B cell (primary cell): ENCODE measurements at regions of chr2 and their contacts with region 1.

Region 1: GRCh38 chr2:233061591-233062450 is 1.7 kb downstream of the INPP5D start:
- DNase-seq: no peak
- ATAC-seq: peak; percentile 12
- H3K4me3 ChIP-seq: peak overlapping the region; percentile 91 to 99 (median 98)
- H3K4me3 Mint-ChIP-seq: peak overlapping the region; percentile 76
- H3K27ac ChIP-seq: peak overlapping the region; percentile 90 to 95
- H3K27ac Mint-ChIP-seq: peak overlapping the region; percentile 87
- H3K4me1 ChIP-seq: peaks cover 38 to 66% of the 10 kb centered on the region in 2 donors
- H3K4me1 Mint-ChIP-seq: peaks cover 56% of the 10 kb centered on the region
- H3K27me3 ChIP-seq: no peaks in the 10 kb centered on the region
- H3K27me3 Mint-ChIP-seq: no peaks in the 10 kb centered on the region
- CTCF ChIP-seq: peak; percentile 20

Region 2: GRCh38 chr2:232854082-232854481 is 207.7 kb before region 1 on chr2:
- CTCF ChIA-PET with region 1: interaction called, 18 read pairs
- POLR2A ChIA-PET with region 1: no interaction called
- intact Hi-C with region 1: no loop called
- DNase-seq: no peak
- ATAC-seq: no peak
- H3K4me3 ChIP-seq: no peak overlapping the region
- H3K4me3 Mint-ChIP-seq: no peak overlapping the region
- H3K27ac ChIP-seq: no peak overlapping the region
- H3K27ac Mint-ChIP-seq: no peak overlapping the region
- H3K4me1 ChIP-seq: no peaks in the 10 kb centered on the region
- H3K4me1 Mint-ChIP-seq: no peaks in the 10 kb centered on the region
- H3K27me3 ChIP-seq: no peaks in the 10 kb centered on the region
- H3K27me3 Mint-ChIP-seq: no peaks in the 10 kb centered on the region
- CTCF ChIP-seq: no peak

Region 3: DNA sequence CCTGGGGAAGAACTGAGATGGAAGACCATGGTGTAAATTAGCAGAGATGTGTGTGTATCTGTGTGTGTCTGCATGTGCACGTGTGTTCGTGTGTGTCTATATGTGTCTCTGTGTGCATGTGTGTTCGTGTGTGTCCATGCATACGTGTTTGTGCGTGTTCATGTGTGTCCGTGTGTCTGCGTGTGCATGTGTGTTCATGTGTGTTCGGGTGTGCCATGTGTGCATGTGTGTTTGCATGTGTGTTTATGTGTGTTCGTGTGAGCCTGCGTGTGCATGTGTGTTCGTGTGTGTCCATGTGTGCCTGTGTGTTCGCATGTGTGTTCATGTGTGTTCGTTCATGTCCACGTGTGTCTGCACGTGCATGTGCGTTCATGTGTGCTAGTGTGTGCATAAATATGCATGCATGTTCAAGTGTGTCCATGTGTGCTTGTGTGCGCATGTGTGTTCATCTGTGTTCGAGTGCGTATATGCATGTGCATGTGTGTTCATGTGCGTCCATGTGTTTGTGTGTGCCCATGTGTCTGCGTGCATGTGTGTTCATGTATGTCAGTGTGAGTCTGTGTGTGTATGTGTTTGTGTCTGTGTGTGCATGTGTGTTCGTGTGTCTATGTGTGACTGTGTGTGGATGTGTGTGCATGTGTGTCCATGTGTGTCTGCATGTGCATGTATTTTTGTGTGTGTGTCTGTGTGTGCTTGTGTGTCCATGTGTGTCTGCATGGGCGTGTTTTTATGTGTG is 26.2 kb before region 1 on chr2:
- CTCF ChIA-PET with region 1: no interaction called
- POLR2A ChIA-PET with region 1: no interaction called
- intact Hi-C with region 1: no loop called
- DNase-seq: no peak
- ATAC-seq: no peak
- H3K4me3 ChIP-seq: no peak overlapping the region
- H3K4me3 Mint-ChIP-seq: no peak overlapping the region
- H3K27ac ChIP-seq: no peak overlapping the region
- H3K27ac Mint-ChIP-seq: no peak overlapping the region
- H3K4me1 ChIP-seq: no peaks in the 10 kb centered on the region
- H3K4me1 Mint-ChIP-seq: no peaks in the 10 kb centered on the region
- H3K27me3 ChIP-seq: no peaks in the 10 kb centered on the region
- H3K27me3 Mint-ChIP-seq: peaks cover 6% of the 10 kb centered on the region
- CTCF ChIP-seq: no peak

Region 4: DNA sequence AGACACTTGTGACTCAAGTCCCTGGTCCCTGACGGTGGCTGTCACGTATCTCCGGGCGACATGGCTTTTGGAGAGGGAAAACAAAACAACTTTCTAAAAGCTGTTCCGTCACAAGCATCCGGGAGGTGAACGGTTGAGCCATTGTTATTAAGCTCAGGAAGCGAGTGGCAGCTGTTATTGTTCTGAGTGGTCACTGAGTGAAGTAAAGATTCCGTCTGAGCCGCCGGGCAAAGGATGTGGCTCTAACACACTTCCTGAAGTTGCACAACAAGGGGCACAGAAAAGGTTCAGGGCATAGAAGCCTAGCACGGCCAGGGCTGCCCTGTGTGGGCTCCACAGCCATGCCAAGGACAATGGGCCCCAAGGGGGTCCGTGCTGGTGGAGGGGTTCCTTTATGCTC is 22.7 kb after region 1 on chr2:
- CTCF ChIA-PET with region 1: interaction called, 70 read pairs
- POLR2A ChIA-PET with region 1: interaction called, 112 read pairs
- intact Hi-C with region 1: loop called (anchors 1 kb)
- DNase-seq: peak; percentile 53
- ATAC-seq: peak; percentile 19
- H3K4me3 ChIP-seq: peak overlapping the region; percentile 2 to 48 (median 17)
- H3K4me3 Mint-ChIP-seq: peak overlapping the region; percentile 78
- H3K27ac ChIP-seq: peak overlapping the region; percentile 88
- H3K27ac Mint-ChIP-seq: peak overlapping the region; percentile 94
- H3K4me1 ChIP-seq: peaks cover 91 to 100% of the 10 kb centered on the region in 2 donors
- H3K4me1 Mint-ChIP-seq: peaks cover 95% of the 10 kb centered on the region
- H3K27me3 ChIP-seq: no peaks in the 10 kb centered on the region
- H3K27me3 Mint-ChIP-seq: no peaks in the 10 kb centered on the region
- CTCF ChIP-seq: no peak

Region 5: DNA sequence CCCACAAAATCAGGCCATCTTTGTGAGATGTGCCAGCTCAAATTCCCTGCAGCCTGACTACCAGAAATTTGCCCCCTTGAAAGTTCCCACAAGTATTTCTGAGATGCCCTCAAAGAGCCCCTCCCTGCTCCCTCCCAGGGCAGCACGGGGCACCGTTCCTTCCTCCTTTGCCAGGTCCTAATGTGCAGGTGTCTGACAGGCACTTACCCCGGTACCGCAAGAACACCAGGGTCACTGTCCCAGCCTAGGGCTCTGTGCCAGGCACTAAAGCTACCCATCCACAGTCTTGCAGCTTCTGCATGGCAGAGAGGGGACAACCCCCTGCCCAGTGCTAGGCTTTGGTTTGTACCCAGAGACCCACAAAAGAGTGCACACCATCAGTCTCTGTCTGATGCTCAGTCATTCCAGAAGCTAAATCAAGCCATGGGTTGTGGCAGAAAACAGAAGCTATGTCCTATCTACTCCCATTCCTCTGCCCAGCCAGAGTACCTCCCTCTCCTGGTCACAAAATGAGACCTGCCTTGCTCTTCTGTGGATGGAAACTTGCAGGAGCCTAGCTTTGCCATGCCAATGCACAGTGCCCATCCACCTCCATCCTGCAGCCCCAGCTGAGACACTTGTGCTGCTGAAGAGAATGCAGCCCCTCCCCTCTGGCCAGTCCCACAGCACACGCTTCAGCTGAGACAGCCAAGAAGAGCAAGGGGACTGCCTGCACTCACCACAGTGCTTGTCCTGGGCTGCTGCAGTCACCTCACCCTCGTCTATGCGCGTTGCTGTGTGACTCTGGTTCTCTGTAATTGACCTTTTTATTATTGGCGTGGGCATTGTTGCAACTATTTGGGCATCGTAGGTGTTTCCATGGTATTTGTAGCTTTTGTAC is 47.0 kb after region 1 on chr2:
- CTCF ChIA-PET with region 1: interaction called, 21 read pairs
- POLR2A ChIA-PET with region 1: interaction called, 11 read pairs
- intact Hi-C with region 1: no loop called
- DNase-seq: peak; percentile 42
- ATAC-seq: peak; percentile 63
- H3K4me3 ChIP-seq: no peak overlapping the region
- H3K4me3 Mint-ChIP-seq: peak overlapping the region; percentile 82
- H3K27ac ChIP-seq: peak overlapping the region in 1 of 2 donors; percentile 73
- H3K27ac Mint-ChIP-seq: peak overlapping the region; percentile 89
- H3K4me1 ChIP-seq: peaks cover 68 to 78% of the 10 kb centered on the region in 2 donors
- H3K4me1 Mint-ChIP-seq: peaks cover 80% of the 10 kb centered on the region
- H3K27me3 ChIP-seq: no peaks in the 10 kb centered on the region
- H3K27me3 Mint-ChIP-seq: no peaks in the 10 kb centered on the region
- CTCF ChIP-seq: no peak

Region 6: DNA sequence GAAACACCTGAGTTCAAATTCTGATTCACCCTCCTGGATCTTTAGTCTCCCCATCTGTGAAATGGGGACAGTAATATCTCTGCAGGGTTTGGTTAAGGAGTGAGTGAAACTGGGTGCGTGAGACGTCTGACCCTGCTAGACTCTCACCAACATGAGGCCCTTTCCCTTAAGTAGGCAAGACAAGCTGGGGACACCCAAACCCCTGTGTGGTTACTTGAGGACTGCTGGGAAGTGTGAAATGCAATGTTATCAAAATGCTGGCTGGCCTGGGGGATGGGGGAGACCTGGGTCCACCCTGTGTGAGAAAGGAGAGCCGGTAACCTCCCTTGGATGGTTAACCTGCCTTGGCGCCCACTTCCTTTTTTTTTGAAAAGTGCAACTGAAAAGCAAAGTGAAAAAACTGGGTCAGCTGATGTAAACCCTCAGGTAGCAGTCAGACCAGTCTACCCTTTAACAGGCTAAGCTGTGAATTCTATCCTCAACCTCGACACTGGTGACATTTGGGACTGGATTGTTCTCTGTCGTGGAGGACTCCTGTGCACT is 80.6 kb after region 1 on chr2:
- CTCF ChIA-PET with region 1: interaction called, 8 read pairs
- POLR2A ChIA-PET with region 1: interaction called, 4 read pairs
- intact Hi-C with region 1: loop called (anchors 2 kb)
- DNase-seq: peak; percentile 72
- ATAC-seq: peak; percentile 82
- H3K4me3 ChIP-seq: no peak overlapping the region
- H3K4me3 Mint-ChIP-seq: peak overlapping the region; percentile 54
- H3K27ac ChIP-seq: peak overlapping the region; percentile 38 to 54
- H3K27ac Mint-ChIP-seq: peak overlapping the region; percentile 91
- H3K4me1 ChIP-seq: peaks cover 13 to 19% of the 10 kb centered on the region in 2 donors
- H3K4me1 Mint-ChIP-seq: peaks cover 34% of the 10 kb centered on the region
- H3K27me3 ChIP-seq: no peaks in the 10 kb centered on the region
- H3K27me3 Mint-ChIP-seq: no peaks in the 10 kb centered on the region
- CTCF ChIP-seq: no peak

Region 7: GRCh38 chr2:233165895-233166661 is 104.3 kb after region 1 on chr2:
- CTCF ChIA-PET with region 1: no interaction called
- POLR2A ChIA-PET with region 1: no interaction called
- intact Hi-C with region 1: no loop called
- DNase-seq: no peak
- ATAC-seq: no peak
- H3K4me3 ChIP-seq: no peak overlapping the region
- H3K4me3 Mint-ChIP-seq: no peak overlapping the region
- H3K27ac ChIP-seq: peak overlapping the region in 1 of 2 donors; percentile 4
- H3K27ac Mint-ChIP-seq: peak overlapping the region; percentile 41
- H3K4me1 ChIP-seq: no peaks in the 10 kb centered on the region
- H3K4me1 Mint-ChIP-seq: no peaks in the 10 kb centered on the region
- H3K27me3 ChIP-seq: no peaks in the 10 kb centered on the region
- H3K27me3 Mint-ChIP-seq: no peaks in the 10 kb centered on the region
- CTCF ChIP-seq: no peak